Posterior cingulate gyrus (tissue), 11 donors: ENCODE measurements at regions of chr10 and their contacts with region 1.

Region 1: DNA sequence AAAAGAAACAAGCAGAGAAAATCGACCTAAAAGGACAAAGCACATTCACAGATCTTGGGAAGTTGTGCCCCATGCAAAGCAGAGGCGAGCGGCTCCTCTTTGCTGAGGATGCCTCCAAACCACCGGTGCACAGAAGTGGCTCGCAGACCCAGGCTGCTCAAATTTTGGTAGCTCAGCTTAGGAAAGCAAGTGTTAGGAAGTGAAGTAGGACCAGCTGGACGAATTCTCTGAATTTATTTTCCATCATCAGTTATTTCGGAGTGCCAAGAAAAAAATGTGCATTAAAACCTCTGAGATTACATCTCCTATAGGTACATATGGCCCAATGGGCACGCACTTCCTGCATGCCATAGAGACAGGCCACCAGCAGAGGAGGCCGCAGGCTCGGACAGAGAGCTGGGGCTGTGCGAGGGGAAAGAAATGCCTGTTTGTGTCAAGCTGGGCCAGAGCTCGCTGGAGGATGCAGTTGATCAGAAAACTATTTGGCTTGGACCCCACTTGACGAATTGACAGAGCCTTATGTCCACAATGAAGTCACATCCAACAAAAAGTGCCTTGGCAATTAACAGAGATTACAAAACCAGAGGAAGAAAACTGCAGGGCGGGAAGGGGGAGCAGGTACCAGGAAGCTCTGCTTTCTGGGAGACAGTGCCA is 122.3 kb upstream of the LYZL2 start:
- DNase-seq: peak; percentile 59 to 97 (median 82)

Region 2: GRCh38 chr10:31490858-31491504 is 739.2 kb after region 1 on chr10:
- intact Hi-C with region 1: loop called (anchors 5 kb)
- DNase-seq: no peak

Region 3: DNA sequence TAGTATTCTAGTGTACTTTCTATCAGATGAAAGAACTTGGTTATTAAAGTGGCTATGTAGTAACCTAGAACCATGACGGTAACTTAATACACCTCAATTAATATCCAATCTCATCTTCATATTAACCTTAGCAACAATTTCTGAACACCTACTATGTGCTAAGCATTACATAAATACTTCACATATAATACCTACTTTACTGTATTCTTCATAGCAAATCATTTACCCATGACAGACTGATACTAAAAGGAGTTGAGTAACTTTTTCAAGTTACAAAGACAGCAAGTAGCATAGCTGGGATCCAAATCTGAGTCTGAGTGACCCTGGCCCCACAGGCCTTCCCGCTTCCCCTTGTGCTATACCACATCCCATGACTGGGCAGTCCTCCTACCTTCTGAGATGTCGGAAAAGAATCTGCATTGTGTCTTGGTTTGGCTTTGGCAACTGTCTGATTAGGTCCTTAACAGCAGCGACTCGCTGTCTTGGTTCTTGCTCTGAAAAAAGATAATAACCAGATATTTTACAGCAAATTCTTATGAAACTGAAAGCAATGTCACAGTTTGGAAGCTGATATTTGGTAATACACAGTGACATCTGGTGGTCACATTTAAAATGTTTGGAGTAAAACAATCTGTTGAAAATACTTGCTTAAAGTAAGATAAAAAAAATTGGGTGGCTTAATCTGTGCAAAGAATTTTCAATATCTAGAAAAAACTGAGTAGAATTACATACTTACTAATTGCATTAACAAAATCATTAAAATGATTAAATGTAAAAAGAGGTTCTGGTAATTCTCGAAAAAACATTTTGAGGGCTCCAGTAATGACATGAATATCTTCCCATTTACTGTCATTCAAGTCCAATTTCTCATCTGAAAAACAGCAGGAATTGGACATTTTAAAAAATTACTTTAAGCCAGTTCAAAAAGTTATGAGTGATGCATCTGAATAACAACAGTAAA is 1056.7 kb after region 1 on chr10:
- intact Hi-C with region 1: loop called (anchors 10 kb)
- DNase-seq: peak in 2 of 10 donors; percentile 15 to 82